Heart left ventricle (tissue), 16 donors: ENCODE measurements at regions of chr1 and their contacts with region 1.

Region 1: GRCh38 chr1:66725885-66726665 is 26.2 kb upstream of the DYNLT5 start:
- DNase-seq: peak in 4 of 5 donors; percentile 26 to 43 (median 40)
- ATAC-seq: peak; percentile 58 to 85 (median 80)
- H3K4me3 ChIP-seq: no peak overlapping the region
- H3K27ac ChIP-seq: no peak overlapping the region
- H3K4me1 ChIP-seq: peaks cover 0 to 14% (median 2%) of the 10 kb centered on the region in 12 donors
- H3K27me3 ChIP-seq: no peaks in the 10 kb centered on the region
- CTCF ChIP-seq: peak; percentile 91 to 99 (median 96)
- POLR2A ChIP-seq: no peak

Region 2: GRCh38 chr1:66446261-66447001 is 279.6 kb before region 1 on chr1:
- intact Hi-C with region 1: loop called in 4 of 10 experiments (anchors 5 to 10 kb)
- DNase-seq: peak in 2 of 5 donors; percentile 22 to 39
- ATAC-seq: peak in 3 of 4 donors; percentile 41 to 59 (median 57)
- H3K4me3 ChIP-seq: no peak overlapping the region
- H3K27ac ChIP-seq: peak overlapping the region in 5 of 12 donors; percentile 21 to 78 (median 64)
- H3K4me1 ChIP-seq: peaks cover 0 to 40% (median 19%) of the 10 kb centered on the region in 12 donors
- H3K27me3 ChIP-seq: no peaks in the 10 kb centered on the region
- CTCF ChIP-seq: peak; percentile 74 to 94 (median 88)
- POLR2A ChIP-seq: no peak

Region 3: DNA sequence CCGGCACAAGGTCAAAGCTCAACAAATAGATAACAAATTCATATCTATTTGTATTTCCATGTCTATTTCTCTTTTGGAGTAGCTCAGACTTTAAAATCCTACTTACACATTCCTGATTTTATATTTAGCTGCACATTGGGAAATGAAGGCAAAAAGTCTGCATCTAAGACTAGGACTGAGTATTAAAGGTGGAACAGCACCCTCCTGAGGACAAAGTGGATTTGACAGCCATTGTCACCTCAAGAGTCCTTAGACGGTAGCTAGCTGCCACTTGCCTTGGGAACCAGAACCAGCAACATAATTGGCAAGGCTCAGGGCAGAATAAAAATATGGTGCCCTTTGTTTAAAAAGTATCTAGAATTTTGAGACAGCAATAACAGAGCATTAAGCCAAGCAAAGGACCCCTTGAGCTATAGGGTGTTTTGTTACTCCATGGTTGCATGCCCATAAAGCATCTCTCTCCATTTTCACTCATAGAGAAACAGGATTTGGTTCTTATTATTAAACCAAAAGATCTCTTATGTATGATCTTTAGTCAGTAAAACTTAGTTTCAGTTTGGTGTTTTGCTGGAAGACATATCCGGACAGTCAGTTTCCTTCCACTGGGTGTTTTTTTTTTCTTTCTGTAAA is 222.1 kb before region 1 on chr1:
- intact Hi-C with region 1: loop called in 2 of 10 experiments (anchors 5 to 10 kb)
- DNase-seq: peak in 3 of 5 donors; percentile 39 to 48 (median 39)
- ATAC-seq: peak; percentile 81 to 89 (median 86)
- H3K4me3 ChIP-seq: no peak overlapping the region
- H3K27ac ChIP-seq: no peak overlapping the region
- H3K4me1 ChIP-seq: peaks cover 0 to 14% (median 0%) of the 10 kb centered on the region in 12 donors
- H3K27me3 ChIP-seq: no peaks in the 10 kb centered on the region
- CTCF ChIP-seq: peak; percentile 47 to 78 (median 67)
- POLR2A ChIP-seq: no peak

Region 4: DNA sequence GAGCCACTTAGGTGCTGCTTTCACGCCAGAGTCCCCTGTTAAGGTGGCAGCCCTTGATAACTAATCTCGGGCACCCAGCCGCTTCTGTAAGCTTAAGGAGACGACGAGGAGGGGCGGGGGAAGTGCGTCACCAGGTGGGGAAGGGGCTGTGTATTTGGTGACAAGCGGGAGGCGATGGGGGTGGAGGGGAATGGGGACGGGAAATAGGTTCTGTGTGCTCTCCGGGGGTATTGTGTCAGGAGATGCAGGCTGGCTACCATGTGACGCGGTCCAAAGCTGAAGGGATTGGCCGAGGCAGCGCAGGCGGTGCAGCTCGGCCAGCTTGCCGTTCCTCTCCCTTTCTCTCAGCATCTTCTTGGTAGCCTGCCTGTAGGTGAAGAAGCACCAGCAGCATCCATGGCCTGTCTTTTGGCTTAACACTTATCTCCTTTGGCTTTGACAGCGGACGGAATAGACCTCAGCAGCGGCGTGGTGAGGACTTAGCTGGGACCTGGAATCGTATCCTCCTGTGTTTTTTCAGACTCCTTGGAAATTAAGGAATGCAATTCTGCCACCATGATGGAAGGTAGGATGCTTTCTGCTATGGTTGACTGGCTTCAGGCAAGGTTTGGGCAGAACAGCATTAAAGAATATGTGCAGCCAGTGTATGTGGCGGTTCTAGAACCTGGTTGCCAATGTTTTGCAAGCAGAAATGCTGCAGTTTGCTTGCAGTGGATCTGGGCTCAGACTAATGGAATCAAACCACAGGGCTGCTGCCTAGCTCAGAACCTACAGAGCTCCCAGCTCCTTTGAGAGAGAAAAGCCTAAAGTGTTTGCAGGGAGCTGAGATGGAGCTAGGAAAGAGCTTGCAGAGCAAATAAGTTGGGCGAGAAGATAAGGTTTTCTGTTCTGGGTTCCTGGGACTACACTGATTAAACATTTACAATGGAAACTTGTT is 192.0 kb before region 1 on chr1 and contains the start of gene SGIP1:
- intact Hi-C with region 1: loop called in 2 of 10 experiments (anchors 5 to 10 kb)
- DNase-seq: peak; percentile 67 to 82 (median 72)
- ATAC-seq: peak; percentile 84 to 95 (median 93)
- H3K4me3 ChIP-seq: peak within 1 kb of the TSS; percentile 36 to 67 (median 53)
- H3K27ac ChIP-seq: peak within 1 kb of the TSS; percentile 69 to 86 (median 78)
- H3K4me1 ChIP-seq: peaks cover 0 to 46% (median 11%) of the 10 kb centered on the region in 12 donors
- H3K27me3 ChIP-seq: peaks cover 0 to 11% (median 0%) of the 10 kb centered on the region in 9 donors
- CTCF ChIP-seq: no peak
- POLR2A ChIP-seq: peak in 1 of 2 donors; percentile 28
- total RNA-seq, gene SGIP1: 2.1 to 17.3 (median 5.0) TPM

Region 5: GRCh38 chr1:66778266-66778665 is 52.2 kb after region 1 on chr1:
- intact Hi-C with region 1: no loop called
- DNase-seq: no peak
- ATAC-seq: no peak
- H3K4me3 ChIP-seq: no peak overlapping the region
- H3K27ac ChIP-seq: no peak overlapping the region
- H3K4me1 ChIP-seq: no peaks in the 10 kb centered on the region
- H3K27me3 ChIP-seq: no peaks in the 10 kb centered on the region
- CTCF ChIP-seq: no peak
- POLR2A ChIP-seq: no peak